Right cardiac atrium (tissue), 5 donors: ENCODE measurements at regions of chr19 and their contacts with region 1.

Region 1: GRCh38 chr19:47790398-47790814 is 11.9 kb downstream of the SELENOW start:
- DNase-seq: peak; percentile 88 to 95 (median 93)
- ATAC-seq: peak; percentile 76 to 77
- H3K4me3 ChIP-seq: no peak overlapping the region
- H3K27ac ChIP-seq: no peak overlapping the region
- H3K4me1 ChIP-seq: no peaks in the 10 kb centered on the region
- H3K27me3 ChIP-seq: no peaks in the 10 kb centered on the region

Region 2: GRCh38 chr19:47713046-47714021 is 77.1 kb before region 1 on chr19 and contains the start of gene EHD2:
- intact Hi-C with region 1: loop called in 1 of 4 experiments (anchors 5 kb)
- DNase-seq: peak; percentile 84 to 93 (median 92)
- ATAC-seq: peak; percentile 96 to 97
- H3K4me3 ChIP-seq: peak within 1 kb of the TSS; percentile 79
- H3K27ac ChIP-seq: peak within 1 kb of the TSS; percentile 98
- H3K4me1 ChIP-seq: peaks cover 9% of the 10 kb centered on the region
- H3K27me3 ChIP-seq: no peaks in the 10 kb centered on the region
- total RNA-seq, gene EHD2: 32.8 to 61.9 (median 49.1) TPM

Region 3: DNA sequence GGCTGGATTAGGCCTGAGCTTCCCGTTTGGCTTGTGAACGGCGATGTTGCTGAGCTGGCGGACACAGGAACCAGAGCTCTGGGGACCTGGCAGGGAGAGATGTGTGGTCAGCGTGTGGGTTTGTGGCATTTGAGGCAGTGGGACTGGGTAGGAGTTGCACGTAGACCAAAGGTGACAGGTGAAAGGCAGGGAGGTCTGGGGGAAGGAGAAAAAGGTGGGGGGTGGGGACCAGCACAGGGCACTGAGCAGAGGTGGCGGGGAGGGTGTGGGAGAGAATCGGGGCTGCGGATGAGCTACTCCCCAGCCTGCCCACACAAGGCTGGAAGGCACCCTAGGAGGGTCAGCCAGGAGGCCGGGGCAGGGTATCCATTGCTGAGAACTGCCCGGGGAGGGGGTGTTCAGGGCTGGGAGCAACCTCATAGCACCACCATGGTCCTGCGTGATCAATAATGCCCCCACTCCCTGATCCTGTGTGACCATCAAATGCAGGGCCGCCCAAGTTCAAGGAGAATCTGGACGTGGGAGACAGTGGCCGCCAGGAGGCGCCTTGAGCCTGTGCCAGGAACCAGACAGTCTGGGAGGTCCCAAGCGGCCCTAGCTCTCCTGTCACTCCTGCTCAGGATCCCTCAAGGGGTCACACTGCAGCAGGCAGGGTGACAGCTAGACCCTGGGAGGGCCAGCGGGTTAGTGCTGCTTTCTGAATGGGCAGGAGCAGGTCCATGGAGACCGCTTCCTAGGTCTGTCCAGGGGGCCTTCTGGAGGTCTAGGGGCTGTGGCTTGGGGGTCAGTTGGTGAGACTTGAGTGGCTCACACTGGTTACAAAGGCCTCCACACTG is 24.7 kb before region 1 on chr19:
- intact Hi-C with region 1: loop called in 2 of 4 experiments (anchors 2 kb)
- DNase-seq: peak; percentile 81 to 91 (median 87)
- ATAC-seq: peak; percentile 73 to 78
- H3K4me3 ChIP-seq: no peak overlapping the region
- H3K27ac ChIP-seq: no peak overlapping the region
- H3K4me1 ChIP-seq: no peaks in the 10 kb centered on the region
- H3K27me3 ChIP-seq: no peaks in the 10 kb centered on the region

Region 4: GRCh38 chr19:47863514-47863936 is 73.1 kb after region 1 on chr19:
- intact Hi-C with region 1: loop called in 1 of 4 experiments (anchors 10 kb)
- DNase-seq: peak; percentile 87 to 94 (median 93)
- ATAC-seq: peak; percentile 93 to 94
- H3K4me3 ChIP-seq: no peak overlapping the region
- H3K27ac ChIP-seq: no peak overlapping the region
- H3K4me1 ChIP-seq: no peaks in the 10 kb centered on the region
- H3K27me3 ChIP-seq: no peaks in the 10 kb centered on the region